Endothelial cell of umbilical vein (primary cell): ENCODE measurements at regions of chr11 and their contacts with region 1.

Region 1: GRCh38 chr11:59135648-59136461 is 6.8 kb upstream of the FAM111A start:
- DNase-seq: peak; percentile 82
- H3K4me3 ChIP-seq: no peak overlapping the region
- H3K27ac ChIP-seq: no peak overlapping the region
- H3K4me1 ChIP-seq: no peaks in the 10 kb centered on the region
- H3K27me3 ChIP-seq: no peaks in the 10 kb centered on the region
- CTCF ChIP-seq: peak; percentile 98 to 99
- POLR2A ChIP-seq: no peak

Region 2: DNA sequence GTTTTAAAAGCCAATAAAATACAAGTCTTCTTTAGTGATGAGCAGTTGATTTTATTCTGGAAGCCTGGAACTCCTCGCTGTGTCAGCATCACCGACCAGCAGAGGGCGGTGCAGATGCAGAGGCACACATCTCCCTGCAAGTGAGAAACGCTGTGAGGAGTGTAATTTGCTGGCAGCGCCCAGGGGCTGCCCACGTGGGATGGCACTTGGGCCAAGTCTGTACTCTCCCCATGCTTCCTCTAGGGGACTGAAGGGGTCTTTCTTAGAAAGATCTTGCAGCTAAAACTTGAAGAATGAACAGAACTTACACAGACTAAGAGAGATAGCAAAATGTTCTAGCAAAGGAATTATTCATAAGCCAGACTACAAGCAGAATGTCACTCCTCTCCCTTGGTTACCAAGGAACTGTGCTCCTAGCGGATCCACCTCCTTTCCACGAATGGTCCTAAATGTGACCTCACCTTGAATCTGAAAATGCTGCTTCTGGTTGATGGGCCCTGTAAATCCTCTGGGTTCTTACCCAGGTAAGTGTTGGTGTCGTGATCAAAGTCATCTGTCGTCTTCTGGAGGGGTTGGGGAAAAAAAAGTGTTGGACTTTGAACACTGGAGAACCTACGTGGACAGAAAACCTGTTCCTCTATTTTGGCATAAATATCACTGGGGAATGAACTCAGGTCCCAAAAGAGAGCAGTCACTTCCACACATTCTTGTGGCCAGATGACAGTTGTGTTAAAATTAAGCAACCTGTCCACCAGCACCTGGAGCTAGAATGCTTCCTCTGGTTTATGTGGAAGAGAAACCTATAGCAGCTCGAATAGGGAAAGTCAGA is 481.6 kb before region 1 on chr11:
- CTCF ChIA-PET with region 1: interaction called, 7 read pairs
- POLR2A ChIA-PET with region 1: no interaction called
- dilution Hi-C with region 1: no loop called
- intact Hi-C with region 1: loop called (anchors 1 kb)
- DNase-seq: peak; percentile 75
- H3K4me3 ChIP-seq: no peak overlapping the region
- H3K27ac ChIP-seq: no peak overlapping the region
- H3K4me1 ChIP-seq: no peaks in the 10 kb centered on the region
- H3K27me3 ChIP-seq: peaks cover 5 to 24% of the 10 kb centered on the region in 2 experiments
- CTCF ChIP-seq: peak; percentile 91 to 94
- POLR2A ChIP-seq: no peak

Region 3: DNA sequence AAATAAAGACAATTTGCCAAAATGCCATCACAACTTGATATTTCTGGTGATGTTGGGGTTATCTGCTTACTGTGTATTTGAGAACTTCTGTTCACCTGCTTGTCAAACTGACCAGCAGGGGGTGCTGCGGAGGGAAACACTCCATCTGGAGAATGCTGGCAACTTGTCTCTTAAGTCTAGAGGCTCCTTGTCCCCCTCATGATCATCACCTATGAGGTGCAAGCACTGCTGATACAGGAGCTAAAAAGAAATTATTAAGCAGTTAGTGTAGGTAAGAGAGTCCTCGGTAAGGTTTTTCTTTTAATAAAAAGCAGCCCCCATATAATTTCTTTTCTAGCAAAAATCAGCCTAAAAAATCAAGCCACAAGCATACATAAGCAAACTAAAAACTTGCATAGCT is 82.5 kb before region 1 on chr11:
- CTCF ChIA-PET with region 1: interaction called, 39 read pairs
- POLR2A ChIA-PET with region 1: no interaction called
- dilution Hi-C with region 1: no loop called
- intact Hi-C with region 1: loop called (anchors 1 kb)
- DNase-seq: peak; percentile 59
- H3K4me3 ChIP-seq: no peak overlapping the region
- H3K27ac ChIP-seq: no peak overlapping the region
- H3K4me1 ChIP-seq: no peaks in the 10 kb centered on the region
- H3K27me3 ChIP-seq: peaks cover 2 to 4% of the 10 kb centered on the region in 2 experiments
- CTCF ChIP-seq: peak; percentile 69 to 74
- POLR2A ChIP-seq: no peak

Region 4: DNA sequence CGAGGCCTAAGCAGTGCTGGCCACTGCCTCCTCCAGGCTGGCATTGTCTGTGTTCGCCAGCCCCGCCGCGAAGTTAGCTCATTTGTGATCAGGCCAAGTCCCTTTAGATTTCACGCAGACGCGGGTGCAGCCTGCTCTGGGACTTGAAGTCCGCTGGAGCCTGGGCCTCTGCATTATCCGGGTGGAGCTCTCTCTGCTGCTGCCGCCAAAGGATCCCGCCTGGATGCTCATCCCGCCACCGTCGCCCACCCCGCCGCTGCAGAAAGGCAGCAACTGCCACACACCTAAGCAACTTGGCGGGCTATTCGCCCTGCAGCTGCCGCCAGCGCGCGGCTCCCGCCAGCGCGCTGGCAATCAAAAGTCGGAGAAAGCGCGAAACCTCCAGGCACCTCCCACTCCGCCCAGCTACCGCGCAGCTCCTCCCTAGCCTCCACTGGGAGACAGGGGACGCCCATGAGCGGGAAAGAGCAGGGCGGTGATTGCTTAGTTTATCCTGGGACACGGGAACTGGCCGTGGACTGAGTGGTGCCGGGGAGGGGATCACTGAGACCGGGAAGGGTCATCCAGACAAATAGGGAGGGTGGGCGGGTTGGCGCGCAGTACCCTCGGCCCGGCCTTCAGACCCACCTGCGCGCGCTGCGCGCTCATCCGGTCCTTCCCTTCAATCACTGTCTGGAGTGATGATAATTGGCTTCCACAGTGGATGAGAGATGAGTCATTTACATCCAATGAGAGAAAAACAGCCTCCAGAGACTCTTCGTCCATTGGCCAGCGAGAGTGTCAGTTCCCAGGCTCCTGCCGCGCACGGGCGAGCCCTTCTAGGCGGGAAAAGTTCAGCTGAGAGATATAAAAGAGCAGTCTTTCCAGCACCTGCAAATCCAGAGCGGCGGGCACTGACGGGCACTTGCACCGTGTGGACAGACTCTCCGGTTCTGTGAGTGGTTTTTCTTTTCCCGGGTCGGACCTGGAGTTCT is 29.2 kb before region 1 on chr11 and contains the start of gene FAM111B:
- CTCF ChIA-PET with region 1: interaction called, 47 read pairs
- POLR2A ChIA-PET with region 1: no interaction called
- dilution Hi-C with region 1: no loop called
- intact Hi-C with region 1: no loop called
- DNase-seq: peak; percentile 91
- H3K4me3 ChIP-seq: peak within 1 kb of the TSS; percentile 44 to 74 (median 56)
- H3K27ac ChIP-seq: peak within 1 kb of the TSS; percentile 39
- H3K4me1 ChIP-seq: peaks cover 20% of the 10 kb centered on the region
- H3K27me3 ChIP-seq: peaks cover 0 to 3% of the 10 kb centered on the region in 2 experiments
- CTCF ChIP-seq: no peak
- POLR2A ChIP-seq: peak; percentile 29
- total RNA-seq, gene FAM111B: 17.4 and 21.9 TPM in 2 replicates

Region 5: GRCh38 chr11:59152312-59152951 is 16.6 kb after region 1 on chr11:
- CTCF ChIA-PET with region 1: interaction called, 44 read pairs
- POLR2A ChIA-PET with region 1: no interaction called
- dilution Hi-C with region 1: no loop called
- intact Hi-C with region 1: no loop called
- DNase-seq: no peak
- H3K4me3 ChIP-seq: no peak overlapping the region
- H3K27ac ChIP-seq: no peak overlapping the region
- H3K4me1 ChIP-seq: no peaks in the 10 kb centered on the region
- H3K27me3 ChIP-seq: no peaks in the 10 kb centered on the region
- CTCF ChIP-seq: no peak
- POLR2A ChIP-seq: no peak